Activated CD8-positive, alpha-beta T cell treated with anti-CD3 and anti-CD28 coated beads for 36 hours (primary cell): ENCODE measurements at regions of chr2 and their contacts with region 1.

Region 1: DNA sequence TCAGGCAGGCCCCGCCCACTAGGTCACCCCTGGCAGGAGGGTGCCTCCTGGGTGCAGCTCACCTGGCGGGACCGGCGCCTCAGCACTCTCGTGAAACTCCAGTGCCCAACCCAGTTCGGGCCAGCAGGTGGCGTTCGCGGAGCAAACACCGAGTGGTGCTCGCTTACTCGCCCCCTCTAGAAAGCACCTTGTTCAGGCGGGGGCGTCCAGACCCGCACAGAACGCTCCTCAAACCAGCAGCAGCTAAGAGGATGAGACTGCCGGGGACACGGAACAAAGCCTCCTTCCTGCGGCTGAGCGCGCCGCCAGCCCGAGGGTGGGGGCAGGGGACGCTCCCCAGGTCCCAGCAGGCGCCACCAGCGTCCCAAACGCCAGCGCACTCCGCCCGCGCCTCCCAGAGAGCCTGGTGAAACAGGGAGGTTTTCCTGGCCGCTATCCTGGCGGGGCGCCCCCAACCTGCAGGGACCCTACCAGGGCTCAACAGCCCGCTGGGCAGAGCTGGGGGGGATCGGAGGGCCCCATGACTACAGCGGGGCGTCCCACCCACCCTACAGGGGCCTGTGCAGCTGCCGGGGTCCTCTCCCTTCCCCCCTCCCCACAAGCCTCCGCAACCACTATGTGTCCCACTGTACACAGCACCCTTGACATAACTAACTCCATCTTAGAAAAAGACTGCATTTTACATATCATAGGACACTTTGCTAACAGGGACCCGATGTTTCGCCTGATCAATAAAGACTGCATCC is 44.7 kb downstream of the MRPS5 start:
- DNase-seq: peak; percentile 98
- ATAC-seq: peak; percentile 75
- H3K4me3 Mint-ChIP-seq: peak overlapping the region; percentile 80
- H3K27ac Mint-ChIP-seq: peak overlapping the region; percentile 93
- H3K4me1 Mint-ChIP-seq: peaks cover 65% of the 10 kb centered on the region
- H3K27me3 Mint-ChIP-seq: no peaks in the 10 kb centered on the region
- CTCF ChIP-seq: peak; percentile 90

Region 2: GRCh38 chr2:94923196-94923595 is 153.8 kb before region 1 on chr2:
- CTCF ChIA-PET with region 1: no interaction called
- POLR2A ChIA-PET with region 1: no interaction called
- intact Hi-C with region 1: no loop called
- DNase-seq: no peak
- ATAC-seq: no peak
- H3K4me3 Mint-ChIP-seq: no peak overlapping the region
- H3K27ac Mint-ChIP-seq: no peak overlapping the region
- H3K4me1 Mint-ChIP-seq: no peaks in the 10 kb centered on the region
- H3K27me3 Mint-ChIP-seq: peaks cover 8% of the 10 kb centered on the region
- CTCF ChIP-seq: no peak

Region 3: DNA sequence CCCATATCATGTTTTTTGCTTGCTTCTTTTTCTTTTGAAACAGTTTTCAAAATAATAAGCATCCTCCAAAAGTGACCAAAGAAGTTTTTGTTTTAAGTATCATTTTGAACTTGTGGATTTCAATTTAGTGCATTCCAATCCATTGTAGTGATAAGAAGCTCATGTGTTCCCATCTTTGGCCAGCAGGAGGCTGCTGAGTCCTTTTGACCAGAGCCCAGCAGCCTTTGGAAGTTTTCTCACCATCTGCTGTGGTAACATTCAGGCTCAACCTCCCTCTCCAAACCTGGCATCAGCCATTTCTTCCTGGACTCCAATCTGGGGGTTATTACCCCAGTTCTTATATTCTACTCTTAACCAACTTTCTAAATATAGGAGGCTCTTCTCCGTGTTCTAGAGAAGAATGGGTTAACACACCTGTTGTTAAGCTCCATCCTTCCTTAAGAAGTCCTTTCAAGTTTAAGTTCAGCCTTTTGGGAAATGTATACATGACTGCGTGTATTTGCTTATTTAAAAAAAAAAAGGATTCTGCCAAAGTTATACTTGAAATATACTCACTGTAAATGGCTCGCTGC is 90.5 kb before region 1 on chr2:
- CTCF ChIA-PET with region 1: interaction called, 17 read pairs
- POLR2A ChIA-PET with region 1: no interaction called
- intact Hi-C with region 1: no loop called
- DNase-seq: peak; percentile 73
- ATAC-seq: peak; percentile 75
- H3K4me3 Mint-ChIP-seq: no peak overlapping the region
- H3K27ac Mint-ChIP-seq: no peak overlapping the region
- H3K4me1 Mint-ChIP-seq: no peaks in the 10 kb centered on the region
- H3K27me3 Mint-ChIP-seq: peaks cover 9% of the 10 kb centered on the region
- CTCF ChIP-seq: peak; percentile 83

Region 4: DNA sequence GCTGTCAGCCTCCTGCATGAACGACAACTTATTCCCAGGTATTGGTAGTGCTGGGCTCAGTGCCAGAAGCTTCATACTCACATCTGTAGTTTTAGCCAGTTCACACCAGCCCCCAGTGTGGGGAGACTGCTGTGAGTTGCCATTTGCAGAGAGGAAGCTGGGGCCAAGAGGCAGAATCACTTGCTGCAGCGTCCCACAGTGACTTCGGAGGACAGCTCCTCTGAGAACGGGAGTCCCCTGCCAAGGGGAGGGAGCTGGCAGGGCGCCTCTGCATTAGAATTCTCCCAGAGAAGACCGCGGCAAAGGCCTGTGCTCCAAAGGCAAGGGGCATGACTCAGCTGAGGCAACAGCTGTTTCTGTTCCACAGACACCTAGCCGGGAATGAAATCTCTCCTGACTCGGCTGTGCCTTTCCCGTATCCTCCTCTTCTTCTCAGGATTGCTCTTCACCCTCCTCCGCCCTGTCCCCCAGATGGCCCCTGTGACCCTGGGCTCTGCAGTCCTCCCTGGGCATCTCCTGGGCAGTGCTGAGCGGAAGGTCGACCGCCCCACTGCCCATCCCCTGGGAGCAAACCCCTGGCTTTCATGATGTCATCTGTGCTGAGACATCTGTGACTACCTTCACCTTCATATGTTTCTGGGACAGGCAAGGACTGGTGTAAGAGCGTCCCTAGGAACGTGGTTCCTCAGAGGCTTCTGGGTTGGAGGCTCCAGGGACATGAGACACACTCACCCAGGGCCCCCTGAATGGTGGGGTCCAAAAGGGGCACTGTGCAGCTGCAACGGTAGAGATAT is 33.5 kb before region 1 on chr2:
- CTCF ChIA-PET with region 1: interaction called, 131 read pairs
- POLR2A ChIA-PET with region 1: interaction called, 4 read pairs
- intact Hi-C with region 1: no loop called
- DNase-seq: peak; percentile 83
- ATAC-seq: peak; percentile 74
- H3K4me3 Mint-ChIP-seq: no peak overlapping the region
- H3K27ac Mint-ChIP-seq: peak overlapping the region; percentile 23
- H3K4me1 Mint-ChIP-seq: peaks cover 76% of the 10 kb centered on the region
- H3K27me3 Mint-ChIP-seq: no peaks in the 10 kb centered on the region
- CTCF ChIP-seq: no peak

Region 5: GRCh38 chr2:95062242-95063085 is 14.5 kb before region 1 on chr2:
- CTCF ChIA-PET with region 1: interaction called, 131 read pairs
- POLR2A ChIA-PET with region 1: interaction called, 37 read pairs
- intact Hi-C with region 1: no loop called
- DNase-seq: no peak
- ATAC-seq: peak; percentile 26
- H3K4me3 Mint-ChIP-seq: no peak overlapping the region
- H3K27ac Mint-ChIP-seq: peak overlapping the region; percentile 80
- H3K4me1 Mint-ChIP-seq: peaks cover 27% of the 10 kb centered on the region
- H3K27me3 Mint-ChIP-seq: no peaks in the 10 kb centered on the region
- CTCF ChIP-seq: no peak

Region 6: DNA sequence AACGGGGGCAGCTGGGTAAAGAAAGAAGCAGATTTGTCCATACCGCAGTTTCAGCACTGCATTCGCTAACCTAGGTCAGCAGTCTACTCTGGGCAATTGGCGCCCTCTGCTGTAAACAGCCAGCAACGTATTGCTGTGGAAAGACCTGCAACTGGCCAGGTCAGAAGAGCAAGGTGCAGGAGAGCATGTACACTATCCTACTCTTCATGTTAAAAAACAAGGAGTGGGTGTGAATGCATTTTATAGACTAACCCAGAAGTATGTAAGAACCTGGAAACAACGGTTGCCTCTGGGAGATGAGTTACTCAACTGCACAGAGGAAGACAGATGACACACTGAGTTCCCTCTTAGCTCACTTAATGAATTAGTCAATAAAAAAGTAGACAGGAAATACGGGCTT is 38.5 kb after region 1 on chr2:
- CTCF ChIA-PET with region 1: interaction called, 223 read pairs
- POLR2A ChIA-PET with region 1: interaction called, 10 read pairs
- intact Hi-C with region 1: loop called (anchors 5 kb)
- DNase-seq: peak; percentile 85
- ATAC-seq: peak; percentile 97
- H3K4me3 Mint-ChIP-seq: no peak overlapping the region
- H3K27ac Mint-ChIP-seq: no peak overlapping the region
- H3K4me1 Mint-ChIP-seq: peaks cover 39% of the 10 kb centered on the region
- H3K27me3 Mint-ChIP-seq: no peaks in the 10 kb centered on the region
- CTCF ChIP-seq: peak; percentile 90